Heart right ventricle (tissue), 16 donors: ENCODE measurements at regions of chr6 and their contacts with region 1.

Region 1: DNA sequence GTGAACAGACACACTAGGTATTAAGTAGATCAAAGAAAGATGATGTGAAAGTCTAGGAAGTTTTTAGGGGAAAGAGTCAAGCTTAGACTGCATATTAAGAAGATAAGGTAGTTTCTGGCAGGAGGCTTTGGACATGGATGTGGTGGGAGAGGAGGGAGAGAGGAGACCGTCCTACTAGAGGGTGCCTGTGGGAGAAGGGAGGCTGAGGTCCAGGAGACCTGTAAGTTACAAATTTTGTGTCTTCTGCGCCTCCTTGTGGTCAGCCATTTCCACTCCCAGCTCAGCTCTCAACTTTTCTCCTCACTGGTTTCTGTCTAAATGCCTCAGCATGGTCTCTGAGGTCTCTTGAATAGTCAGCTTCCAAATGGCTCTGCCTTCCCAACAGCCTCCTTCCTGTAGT is 193.5 kb downstream of the UNC5CL start:
- DNase-seq: peak in 1 of 2 donors; percentile 35
- ATAC-seq: peak in 1 of 8 donors; percentile 29
- H3K4me3 ChIP-seq: no peak overlapping the region
- H3K27ac ChIP-seq: no peak overlapping the region
- H3K4me1 ChIP-seq: peaks cover 0 to 14% (median 0%) of the 10 kb centered on the region in 9 donors
- H3K27me3 ChIP-seq: peaks cover 0 to 28% (median 12%) of the 10 kb centered on the region in 7 donors
- CTCF ChIP-seq: peak; percentile 8 to 63 (median 52)

Region 2: DNA sequence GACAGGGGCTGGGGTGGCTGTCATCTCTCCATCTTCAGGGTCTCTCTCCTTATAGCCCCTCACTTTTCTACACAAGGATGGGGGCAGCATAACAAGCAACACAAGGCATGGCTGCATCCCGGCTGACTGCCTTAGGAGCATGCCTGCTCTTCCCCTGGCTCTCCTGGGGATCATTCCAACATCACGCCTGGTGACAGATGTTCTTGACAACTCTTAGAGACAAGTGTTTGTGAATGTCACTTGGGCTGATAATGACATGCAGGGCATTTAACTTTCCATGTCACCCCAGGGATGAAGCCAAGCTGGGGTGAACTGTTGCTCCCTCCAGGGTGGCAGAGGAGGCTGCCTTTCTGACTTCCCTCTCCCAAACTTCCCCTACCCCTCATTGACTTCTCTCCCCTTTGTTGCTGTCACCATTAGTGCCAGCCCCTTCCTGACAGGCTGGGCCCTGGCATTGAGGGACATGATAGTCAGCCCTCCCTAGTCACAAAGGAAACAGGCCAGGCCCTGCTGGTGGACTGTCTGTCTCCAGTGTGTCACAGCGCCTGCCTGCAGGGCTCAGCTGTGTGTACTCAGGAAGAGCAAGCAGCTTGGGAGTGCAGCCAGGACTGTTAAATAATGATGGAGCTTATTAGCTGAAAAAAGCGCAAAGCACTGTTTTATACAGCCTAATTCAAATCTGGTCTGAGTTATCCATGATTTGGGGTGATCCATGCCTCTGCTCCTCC is 420.2 kb before region 1 on chr6:
- intact Hi-C with region 1: loop called in 1 of 10 experiments (anchors 5 kb)
- DNase-seq: peak; percentile 38 to 63
- ATAC-seq: peak; percentile 79 to 96 (median 94)
- H3K4me3 ChIP-seq: no peak overlapping the region
- H3K27ac ChIP-seq: peak overlapping the region in 2 of 10 donors; percentile 51 to 72
- H3K4me1 ChIP-seq: peaks cover 0 to 21% (median 11%) of the 10 kb centered on the region in 9 donors
- H3K27me3 ChIP-seq: peaks cover 0 to 71% (median 48%) of the 10 kb centered on the region in 7 donors
- CTCF ChIP-seq: no peak

Region 3: GRCh38 chr6:40545954-40546353 is 299.6 kb before region 1 on chr6:
- intact Hi-C with region 1: loop called in 1 of 10 experiments (anchors 10 kb)
- DNase-seq: no peak
- ATAC-seq: no peak
- H3K4me3 ChIP-seq: no peak overlapping the region
- H3K27ac ChIP-seq: no peak overlapping the region
- H3K4me1 ChIP-seq: no peaks in the 10 kb centered on the region
- H3K27me3 ChIP-seq: peaks cover 0 to 18% (median 11%) of the 10 kb centered on the region in 7 donors
- CTCF ChIP-seq: no peak

Region 4: GRCh38 chr6:40762981-40763380 is 82.6 kb before region 1 on chr6:
- intact Hi-C with region 1: no loop called
- DNase-seq: peak; percentile 53 to 71
- ATAC-seq: peak; percentile 80 to 97 (median 92)
- H3K4me3 ChIP-seq: no peak overlapping the region
- H3K27ac ChIP-seq: no peak overlapping the region
- H3K4me1 ChIP-seq: peaks cover 0 to 16% (median 0%) of the 10 kb centered on the region in 9 donors
- H3K27me3 ChIP-seq: peaks cover 0 to 7% (median 0%) of the 10 kb centered on the region in 7 donors
- CTCF ChIP-seq: no peak

Region 5: DNA sequence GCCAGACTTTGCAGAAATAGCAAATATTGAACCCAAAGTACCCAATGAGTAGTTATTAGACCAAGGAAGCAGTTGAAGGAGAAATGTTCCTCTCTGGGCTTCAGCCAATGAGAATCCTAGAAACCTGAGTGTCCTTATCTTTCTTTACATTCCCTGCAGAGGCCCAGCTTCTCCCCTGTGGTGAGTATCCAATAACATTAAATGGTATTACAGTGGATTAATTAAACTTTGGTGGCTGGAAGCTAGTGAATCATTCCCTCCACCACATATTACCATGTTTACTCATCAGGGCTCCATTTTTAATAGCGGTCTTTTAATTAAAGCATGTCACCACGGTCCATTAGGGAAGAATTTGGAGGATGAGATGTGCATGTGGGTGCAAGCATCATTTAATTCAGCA is 119.5 kb after region 1 on chr6:
- intact Hi-C with region 1: no loop called
- DNase-seq: no peak
- ATAC-seq: no peak
- H3K4me3 ChIP-seq: no peak overlapping the region
- H3K27ac ChIP-seq: no peak overlapping the region
- H3K4me1 ChIP-seq: no peaks in the 10 kb centered on the region
- H3K27me3 ChIP-seq: no peaks in the 10 kb centered on the region
- CTCF ChIP-seq: no peak